B cell (primary cell): ENCODE measurements at regions of chr6 and their contacts with region 1.

Region 1: GRCh38 chr6:26568601-26569432 is 27.9 kb upstream of the ABT1 start:
- DNase-seq: peak; percentile 97
- ATAC-seq: peak; percentile 82
- H3K4me3 ChIP-seq: peak overlapping the region; percentile 49 to 88 (median 69)
- H3K4me3 Mint-ChIP-seq: peak overlapping the region; percentile 97
- H3K27ac ChIP-seq: peak overlapping the region; percentile 18 to 56
- H3K27ac Mint-ChIP-seq: peak overlapping the region; percentile 100
- H3K4me1 ChIP-seq: peaks cover 14 to 17% of the 10 kb centered on the region in 2 donors
- H3K4me1 Mint-ChIP-seq: peaks cover 28% of the 10 kb centered on the region
- H3K27me3 ChIP-seq: no peaks in the 10 kb centered on the region
- H3K27me3 Mint-ChIP-seq: peaks cover 3% of the 10 kb centered on the region
- CTCF ChIP-seq: no peak

Region 2: DNA sequence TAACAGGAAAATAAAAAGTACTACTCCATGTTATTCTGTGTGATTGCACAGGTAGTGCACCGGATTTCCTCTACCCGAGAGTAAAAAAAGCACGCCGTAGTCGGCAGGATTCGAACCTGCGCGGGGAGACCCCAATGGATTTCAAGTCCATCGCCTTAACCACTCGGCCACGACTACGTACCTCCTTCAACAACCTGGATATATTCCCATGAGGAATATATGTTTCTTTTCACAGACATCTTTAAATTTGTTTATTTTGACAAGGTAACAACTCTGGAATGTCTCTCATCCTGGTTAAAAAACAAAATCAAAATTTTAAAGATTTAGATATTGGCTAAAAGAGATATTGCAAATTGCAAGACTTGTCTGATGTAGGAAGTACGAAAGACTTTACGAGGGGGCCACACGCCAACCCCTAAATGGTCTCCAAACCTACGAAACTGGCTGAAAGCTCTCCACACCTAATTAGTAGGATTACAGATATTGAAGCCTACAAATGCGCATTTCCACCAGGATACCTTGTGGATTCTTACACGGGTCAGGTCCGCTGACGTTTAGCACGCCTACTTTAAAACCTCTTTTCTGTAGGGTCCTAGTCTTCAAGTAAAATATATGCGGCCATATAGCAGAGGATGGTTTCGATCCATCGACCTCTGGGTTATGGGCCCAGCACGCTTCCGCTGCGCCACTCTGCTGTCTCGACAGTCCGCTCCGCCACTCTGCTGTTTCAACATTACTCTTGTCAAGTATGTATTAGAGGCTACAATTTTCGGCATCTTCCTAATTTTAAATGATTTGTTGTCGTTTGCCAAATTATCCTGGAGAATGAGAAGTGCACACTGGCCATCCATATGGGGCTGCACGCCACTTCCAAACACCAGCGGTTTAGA is 256.1 kb before region 1 on chr6:
- CTCF ChIA-PET with region 1: interaction called, 3 read pairs
- POLR2A ChIA-PET with region 1: interaction called, 3 read pairs
- intact Hi-C with region 1: loop called (anchors 1 kb)
- DNase-seq: peak; percentile 90
- ATAC-seq: peak; percentile 75
- H3K4me3 ChIP-seq: peak overlapping the region; percentile 64 to 100 (median 77)
- H3K4me3 Mint-ChIP-seq: peak overlapping the region; percentile 93
- H3K27ac ChIP-seq: peak overlapping the region in 1 of 2 donors; percentile 56
- H3K27ac Mint-ChIP-seq: peak overlapping the region; percentile 92
- H3K4me1 ChIP-seq: peaks cover 15 to 23% of the 10 kb centered on the region in 2 donors
- H3K4me1 Mint-ChIP-seq: peaks cover 32% of the 10 kb centered on the region
- H3K27me3 ChIP-seq: no peaks in the 10 kb centered on the region
- H3K27me3 Mint-ChIP-seq: peaks cover 4% of the 10 kb centered on the region
- CTCF ChIP-seq: no peak

Region 3: GRCh38 chr6:26342106-26343004 is 226.5 kb before region 1 on chr6:
- CTCF ChIA-PET with region 1: interaction called, 20 read pairs
- POLR2A ChIA-PET with region 1: interaction called, 3 read pairs
- intact Hi-C with region 1: loop called (anchors 5 kb)
- DNase-seq: no peak
- ATAC-seq: peak; percentile 9
- H3K4me3 ChIP-seq: peak overlapping the region in 1 of 5 experiments; percentile 19
- H3K4me3 Mint-ChIP-seq: peak overlapping the region; percentile 52
- H3K27ac ChIP-seq: no peak overlapping the region
- H3K27ac Mint-ChIP-seq: no peak overlapping the region
- H3K4me1 ChIP-seq: peaks cover 9 to 13% of the 10 kb centered on the region in 2 donors
- H3K4me1 Mint-ChIP-seq: peaks cover 8% of the 10 kb centered on the region
- H3K27me3 ChIP-seq: peaks cover 0 to 33% (median 25%) of the 10 kb centered on the region in 4 experiments
- H3K27me3 Mint-ChIP-seq: peaks cover 47% of the 10 kb centered on the region
- CTCF ChIP-seq: no peak

Region 4: DNA sequence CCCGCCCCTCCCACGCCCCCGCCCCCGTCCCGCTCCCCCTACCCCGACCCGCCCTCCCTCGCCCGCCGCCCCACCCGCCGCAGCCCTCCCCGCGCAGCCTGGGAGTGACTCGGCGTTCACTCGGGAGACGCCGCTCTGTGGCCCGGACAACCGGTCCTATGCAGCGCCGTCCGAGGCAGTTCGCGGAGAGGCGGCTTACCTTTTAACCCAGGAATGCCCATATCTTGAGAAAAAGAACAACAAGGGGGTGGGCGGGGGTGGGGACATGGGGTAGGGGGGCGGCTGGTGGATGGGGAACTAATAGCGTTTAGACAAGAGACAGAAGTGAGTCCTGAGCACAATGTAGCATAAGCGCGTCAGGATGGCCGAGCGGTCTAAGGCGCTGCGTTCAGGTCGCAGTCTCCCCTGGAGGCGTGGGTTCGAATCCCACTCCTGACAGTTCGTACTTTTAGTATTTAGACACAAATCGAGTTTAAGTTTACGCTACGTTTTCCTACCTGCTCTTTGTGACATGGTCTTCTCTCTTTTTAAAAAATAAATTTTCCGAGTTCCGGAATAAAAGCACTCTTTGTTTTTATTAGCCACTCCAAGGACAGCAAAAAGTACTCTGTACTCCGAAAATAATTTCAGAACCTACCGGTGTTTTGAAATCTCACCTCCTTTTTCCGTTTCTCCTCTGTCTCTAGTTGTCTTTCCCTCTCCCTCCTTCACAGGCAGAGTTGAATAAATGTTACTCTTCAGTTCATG is 47.8 kb before region 1 on chr6:
- CTCF ChIA-PET with region 1: interaction called, 8 read pairs
- POLR2A ChIA-PET with region 1: no interaction called
- intact Hi-C with region 1: loop called (anchors 1 kb)
- DNase-seq: peak; percentile 94
- ATAC-seq: peak; percentile 64
- H3K4me3 ChIP-seq: peak overlapping the region; percentile 60 to 95 (median 74)
- H3K4me3 Mint-ChIP-seq: peak overlapping the region; percentile 84
- H3K27ac ChIP-seq: peak overlapping the region; percentile 85 to 94
- H3K27ac Mint-ChIP-seq: peak overlapping the region; percentile 91
- H3K4me1 ChIP-seq: peaks cover 17 to 20% of the 10 kb centered on the region in 2 donors
- H3K4me1 Mint-ChIP-seq: peaks cover 33% of the 10 kb centered on the region
- H3K27me3 ChIP-seq: no peaks in the 10 kb centered on the region
- H3K27me3 Mint-ChIP-seq: no peaks in the 10 kb centered on the region
- CTCF ChIP-seq: no peak

Region 5: GRCh38 chr6:26537846-26538571 is 30.8 kb before region 1 on chr6 and contains the start of gene HMGN4:
- CTCF ChIA-PET with region 1: interaction called, 18 read pairs
- POLR2A ChIA-PET with region 1: interaction called, 9 read pairs
- intact Hi-C with region 1: loop called (anchors 1 kb)
- DNase-seq: peak; percentile 97
- ATAC-seq: peak; percentile 68
- H3K4me3 ChIP-seq: peak within 1 kb of the TSS; percentile 89 to 98 (median 92)
- H3K4me3 Mint-ChIP-seq: peak within 1 kb of the TSS; percentile 96
- H3K27ac ChIP-seq: peak within 1 kb of the TSS; percentile 84 to 94
- H3K27ac Mint-ChIP-seq: peak within 1 kb of the TSS; percentile 99
- H3K4me1 ChIP-seq: peaks cover 29 to 35% of the 10 kb centered on the region in 2 donors
- H3K4me1 Mint-ChIP-seq: peaks cover 56% of the 10 kb centered on the region
- H3K27me3 ChIP-seq: no peaks in the 10 kb centered on the region
- H3K27me3 Mint-ChIP-seq: peaks cover 3% of the 10 kb centered on the region
- CTCF ChIP-seq: peak; percentile 8
- total RNA-seq, gene HMGN4: 81.1 and 82.4 TPM in 2 replicates